ENCODE measurements at regions of chr6 and their contacts with region 1.

Region 1: DNA sequence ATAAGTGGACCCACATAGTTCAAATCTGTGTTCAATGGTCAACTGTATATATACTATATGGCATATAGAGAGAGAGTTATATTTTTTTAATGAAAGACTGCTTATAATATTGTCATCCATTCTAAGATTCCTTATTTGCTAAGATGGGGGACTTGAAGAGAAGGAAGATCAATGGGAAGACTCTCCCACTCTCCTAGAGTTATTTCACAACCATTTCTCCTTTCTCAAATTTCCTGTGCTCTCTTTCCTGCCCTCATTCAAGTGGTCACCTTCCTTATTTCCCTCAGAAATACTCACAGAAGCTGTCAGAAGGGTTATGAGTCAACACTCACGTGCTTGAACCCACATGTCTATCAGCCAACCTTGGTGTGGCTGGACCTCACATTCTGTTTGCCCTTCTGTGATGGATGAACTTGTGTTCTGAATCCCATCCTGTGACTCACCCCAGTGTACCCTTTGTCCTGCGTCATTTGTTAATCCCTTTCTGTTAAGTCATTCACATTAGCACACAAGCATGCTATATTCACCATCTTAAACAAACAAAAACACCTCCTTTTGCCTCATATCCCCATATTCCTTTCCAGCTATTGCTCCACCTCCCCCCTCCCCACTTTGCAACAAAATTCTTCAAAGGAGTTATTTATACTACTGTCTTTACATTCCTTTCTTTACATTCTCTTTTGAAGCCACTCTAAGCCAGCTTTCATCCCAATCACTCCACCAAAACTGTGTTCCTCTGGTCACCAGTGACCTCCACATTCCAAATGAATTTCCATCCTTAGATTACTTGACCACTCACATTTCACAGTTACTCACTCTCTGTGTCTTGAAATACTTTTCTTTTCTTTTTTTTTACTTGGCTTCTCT is 279.3 kb upstream of the TCF21 start:
- DNase-seq: peak; percentile 100
- H3K4me3 ChIP-seq: no peak overlapping the region
- H3K27ac ChIP-seq: peak overlapping the region; percentile 92
- H3K27me3 ChIP-seq: no peaks in the 10 kb centered on the region
- CTCF ChIP-seq: no peak

Region 2: DNA sequence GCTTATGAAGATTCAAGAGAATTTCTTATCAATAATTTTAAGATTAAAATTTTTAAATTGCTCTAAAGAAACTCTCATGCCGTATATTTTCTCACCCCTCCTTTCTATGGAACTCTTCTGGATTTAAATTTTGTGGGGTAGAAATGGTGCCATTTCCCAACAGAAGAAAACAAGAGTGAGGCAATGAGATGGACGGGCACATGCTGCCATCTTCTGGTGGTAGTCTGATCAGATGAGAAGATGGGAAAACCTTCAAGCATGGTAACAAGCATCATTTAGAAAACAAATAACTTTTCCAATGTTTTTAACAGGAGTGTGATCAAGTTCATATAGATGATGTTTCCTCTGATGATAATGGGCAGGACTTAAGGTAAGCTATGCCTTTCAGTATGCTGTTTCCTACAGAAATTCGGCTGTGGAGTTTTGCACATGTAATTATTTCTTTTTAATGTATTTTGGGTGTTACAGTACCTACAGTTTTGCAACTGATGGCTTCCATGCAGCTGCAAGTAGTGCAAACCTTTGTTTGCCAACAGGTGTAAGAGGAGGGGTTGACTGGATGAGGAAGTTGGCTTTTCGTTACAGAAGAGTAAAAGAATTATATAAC is 97.1 kb before region 1 on chr6:
- CTCF ChIA-PET with region 1: no interaction called
- POLR2A ChIA-PET with region 1: no interaction called
- DNase-seq: peak; percentile 13
- H3K4me3 ChIP-seq: no peak overlapping the region
- H3K27ac ChIP-seq: no peak overlapping the region
- H3K27me3 ChIP-seq: no peaks in the 10 kb centered on the region
- CTCF ChIP-seq: peak; percentile 69

Region 3: DNA sequence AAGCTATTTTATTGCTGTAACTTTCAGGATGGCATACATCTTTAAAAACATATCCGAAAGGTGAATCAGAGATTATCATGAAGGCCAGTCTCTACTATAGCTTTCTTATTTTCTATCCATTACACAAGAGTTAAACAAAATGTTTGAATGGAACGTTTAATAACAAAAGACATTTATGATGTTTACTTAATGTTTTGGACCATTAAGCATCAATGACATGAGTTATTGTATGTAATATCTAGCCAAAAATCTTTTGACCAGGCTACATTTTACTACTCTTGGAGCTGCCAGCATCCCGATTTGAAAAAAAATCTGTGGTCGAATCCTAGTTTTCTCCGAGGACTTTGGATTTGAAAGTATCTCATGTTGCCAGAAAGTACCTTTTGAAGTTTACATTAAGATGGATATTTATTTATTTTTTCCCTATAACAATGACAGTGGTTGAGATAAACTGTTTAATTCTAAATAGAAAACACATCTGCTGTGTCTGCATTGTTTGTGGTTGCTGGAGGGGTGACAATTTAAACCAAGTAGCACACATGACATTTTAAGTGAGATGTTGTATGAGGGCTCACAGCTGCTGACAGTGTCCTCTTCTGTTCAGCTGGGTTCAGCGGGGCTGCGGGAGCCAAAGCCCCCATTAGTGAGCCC is 14.4 kb before region 1 on chr6:
- CTCF ChIA-PET with region 1: no interaction called
- POLR2A ChIA-PET with region 1: interaction called, 16 read pairs
- DNase-seq: peak; percentile 45
- H3K4me3 ChIP-seq: no peak overlapping the region
- H3K27ac ChIP-seq: peak overlapping the region; percentile 49
- H3K27me3 ChIP-seq: no peaks in the 10 kb centered on the region
- CTCF ChIP-seq: no peak

Region 4: GRCh38 chr6:133631421-133631820 is 21.8 kb after region 1 on chr6:
- CTCF ChIA-PET with region 1: interaction called, 6 read pairs
- POLR2A ChIA-PET with region 1: interaction called, 10 read pairs
- DNase-seq: no peak
- H3K4me3 ChIP-seq: no peak overlapping the region
- H3K27ac ChIP-seq: no peak overlapping the region
- H3K27me3 ChIP-seq: no peaks in the 10 kb centered on the region
- CTCF ChIP-seq: peak; percentile 42